ENCODE measurements at regions of chr17 and their contacts with region 1.

Region 1: DNA sequence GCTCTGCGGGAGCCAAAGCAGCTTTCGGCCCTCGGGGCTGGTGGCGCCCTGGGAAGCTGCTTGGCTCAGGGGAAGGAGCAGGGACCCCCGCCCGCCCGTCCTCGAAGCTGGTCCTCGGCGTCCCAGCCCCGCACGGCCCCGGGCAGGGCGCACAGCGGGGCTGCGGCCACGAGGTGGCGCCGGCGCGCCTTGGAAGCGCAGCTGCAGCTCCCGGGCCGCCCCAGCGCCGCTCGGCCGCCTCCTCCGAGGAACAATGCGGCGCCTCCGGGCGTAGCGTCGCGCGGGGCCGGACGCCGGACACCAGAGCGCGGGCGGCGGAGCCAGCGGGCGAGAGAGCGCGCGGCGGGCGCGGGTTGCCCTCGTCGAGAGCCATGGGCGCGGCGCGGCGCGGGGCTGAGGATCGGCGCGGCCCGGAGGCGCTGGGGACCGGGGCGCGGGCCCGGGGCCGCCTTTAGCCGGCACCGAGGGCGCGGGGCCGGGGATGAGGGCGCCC is at the start of gene MGAT5B:
- DNase-seq: peak; percentile 75
- H3K4me3 ChIP-seq: peak within 1 kb of the TSS in 3 of 4 donors; percentile 14 to 33 (median 33)
- H3K27ac ChIP-seq: no peak within 1 kb of the TSS
- H3K4me1 ChIP-seq: peaks cover 9 to 15% (median 10%) of the 10 kb centered on the region in 4 donors
- H3K27me3 ChIP-seq: peaks cover 74% of the 10 kb centered on the region
- CTCF ChIP-seq: peak in 4 of 5 experiments; percentile 54 to 88 (median 73)
- EP300 ChIP-seq: no peak
- POLR2A ChIP-seq: no peak
- total RNA-seq, gene MGAT5B: not detected

Region 2: DNA sequence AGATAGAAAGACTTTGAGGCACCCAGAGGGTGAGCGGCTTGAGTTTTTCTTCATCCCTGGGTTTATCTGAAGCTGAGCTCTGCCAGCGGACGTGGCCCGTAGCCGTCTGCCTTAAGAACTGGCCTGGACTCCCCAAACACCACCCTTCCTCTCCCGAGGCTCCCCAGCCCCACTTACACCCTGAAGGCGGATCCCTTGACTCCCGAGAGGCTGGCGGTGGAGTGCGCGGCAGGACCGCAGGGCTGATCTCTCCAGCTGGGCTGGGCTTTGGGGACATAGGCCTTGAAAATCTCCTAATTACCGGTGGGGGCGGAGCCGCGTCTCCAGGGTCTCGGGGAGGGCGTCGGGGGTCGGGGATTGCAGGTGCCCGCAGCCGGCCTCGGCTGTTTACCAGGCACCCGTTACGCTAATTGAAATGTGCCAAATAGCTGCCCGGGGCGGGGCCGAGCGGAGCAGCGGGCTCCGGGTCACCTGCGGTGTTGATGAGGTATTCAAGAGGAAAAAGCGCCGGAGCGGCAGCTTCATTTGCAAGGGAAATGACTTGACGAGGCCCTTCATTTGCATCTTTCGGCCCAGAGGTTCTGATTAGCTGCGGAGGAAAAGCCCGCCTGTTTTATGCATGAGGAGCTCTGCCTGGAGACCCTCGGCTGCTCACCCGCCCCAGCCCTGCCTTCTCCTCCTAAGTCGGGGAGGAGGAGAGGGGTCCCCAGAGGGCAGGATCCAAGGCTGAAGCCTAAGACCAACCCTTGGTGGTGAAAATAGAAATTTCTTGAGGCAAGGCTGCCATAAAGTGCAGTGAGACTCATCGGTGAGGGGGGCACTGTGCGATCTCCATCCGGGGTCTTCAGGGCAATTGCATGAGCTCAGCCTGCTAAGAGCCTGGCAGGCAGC is 100.7 kb after region 1 on chr17:
- in situ Hi-C with region 1: no loop called
- intact Hi-C with region 1: no loop called
- DNase-seq: peak; percentile 55
- H3K4me3 ChIP-seq: peak overlapping the region in 2 of 4 donors; percentile 13 to 32
- H3K27ac ChIP-seq: no peak overlapping the region
- H3K4me1 ChIP-seq: peaks cover 0 to 12% (median 3%) of the 10 kb centered on the region in 4 donors
- H3K27me3 ChIP-seq: peaks cover 55% of the 10 kb centered on the region
- CTCF ChIP-seq: no peak
- EP300 ChIP-seq: no peak
- POLR2A ChIP-seq: no peak

Region 3: GRCh38 chr17:77049440-77049839 is 181.2 kb after region 1 on chr17:
- in situ Hi-C with region 1: loop called in 3 of 4 experiments (anchors 10 kb)
- intact Hi-C with region 1: no loop called
- DNase-seq: no peak
- H3K4me3 ChIP-seq: no peak overlapping the region
- H3K27ac ChIP-seq: no peak overlapping the region
- H3K4me1 ChIP-seq: no peaks in the 10 kb centered on the region
- H3K27me3 ChIP-seq: peaks cover 61% of the 10 kb centered on the region
- CTCF ChIP-seq: no peak
- EP300 ChIP-seq: no peak
- POLR2A ChIP-seq: no peak

Region 4: GRCh38 chr17:77054936-77055335 is 186.7 kb after region 1 on chr17:
- in situ Hi-C with region 1: loop called in 2 of 4 experiments (anchors 10 kb)
- intact Hi-C with region 1: no loop called
- DNase-seq: no peak
- H3K4me3 ChIP-seq: no peak overlapping the region
- H3K27ac ChIP-seq: no peak overlapping the region
- H3K4me1 ChIP-seq: no peaks in the 10 kb centered on the region
- H3K27me3 ChIP-seq: peaks cover 71% of the 10 kb centered on the region
- CTCF ChIP-seq: no peak
- EP300 ChIP-seq: no peak
- POLR2A ChIP-seq: no peak

Region 5: DNA sequence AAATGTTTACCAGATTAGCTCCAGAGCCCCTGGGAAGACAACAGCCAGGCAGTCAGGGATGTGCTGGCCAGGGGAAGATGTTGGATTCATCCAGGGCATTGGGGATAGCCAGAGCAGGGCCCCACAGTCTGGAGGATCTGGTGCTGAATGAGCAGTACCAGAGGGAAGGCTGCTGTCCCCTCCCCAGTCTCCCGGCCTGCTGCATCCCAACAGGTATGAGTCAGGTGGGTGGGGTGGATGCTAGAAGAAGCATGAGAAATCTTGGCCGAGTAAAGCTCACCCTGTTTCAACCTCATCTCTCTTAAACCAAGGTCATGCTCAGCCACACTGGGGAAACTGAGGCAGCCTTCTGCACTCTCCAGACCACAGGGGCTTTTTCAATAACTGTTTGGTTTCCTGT is 200.7 kb after region 1 on chr17:
- in situ Hi-C with region 1: loop called in 1 of 4 experiments (anchors 5 kb)
- intact Hi-C with region 1: loop called (anchors 5 kb)
- DNase-seq: no peak
- H3K4me3 ChIP-seq: no peak overlapping the region
- H3K27ac ChIP-seq: no peak overlapping the region
- H3K4me1 ChIP-seq: no peaks in the 10 kb centered on the region
- H3K27me3 ChIP-seq: peaks cover 68% of the 10 kb centered on the region
- CTCF ChIP-seq: no peak
- EP300 ChIP-seq: no peak
- POLR2A ChIP-seq: no peak

Region 6: GRCh38 chr17:77254951-77255825 is 387.0 kb after region 1 on chr17:
- in situ Hi-C with region 1: loop called in 2 of 4 experiments (anchors 25 kb)
- intact Hi-C with region 1: no loop called
- DNase-seq: no peak
- H3K4me3 ChIP-seq: no peak overlapping the region
- H3K27ac ChIP-seq: no peak overlapping the region
- H3K4me1 ChIP-seq: peaks cover 0 to 7% (median 0%) of the 10 kb centered on the region in 4 donors
- H3K27me3 ChIP-seq: peaks cover 13% of the 10 kb centered on the region
- CTCF ChIP-seq: no peak
- EP300 ChIP-seq: no peak
- POLR2A ChIP-seq: no peak